Calu3 (cell line): ENCODE measurements at regions of chr14 and their contacts with region 1.

Region 1: GRCh38 chr14:76962303-76962660 is 66.2 kb downstream of the IRF2BPL start:
- DNase-seq: no peak
- H3K4me3 Mint-ChIP-seq: peak overlapping the region; percentile 75
- H3K27ac Mint-ChIP-seq: peak overlapping the region; percentile 99
- H3K4me1 Mint-ChIP-seq: peaks cover 59% of the 10 kb centered on the region
- H3K27me3 Mint-ChIP-seq: no peaks in the 10 kb centered on the region
- CTCF ChIP-seq: no peak

Region 2: GRCh38 chr14:76595266-76595665 is 367.0 kb before region 1 on chr14:
- CTCF ChIA-PET with region 1: no interaction called
- intact Hi-C with region 1: no loop called
- DNase-seq: no peak
- H3K4me3 Mint-ChIP-seq: no peak overlapping the region
- H3K27ac Mint-ChIP-seq: no peak overlapping the region
- H3K4me1 Mint-ChIP-seq: no peaks in the 10 kb centered on the region
- H3K27me3 Mint-ChIP-seq: peaks cover 75% of the 10 kb centered on the region
- CTCF ChIP-seq: no peak

Region 3: GRCh38 chr14:76918751-76919543 is 43.3 kb before region 1 on chr14:
- CTCF ChIA-PET with region 1: interaction called, 17 read pairs
- intact Hi-C with region 1: loop called (anchors 5 kb)
- DNase-seq: peak; percentile 92
- H3K4me3 Mint-ChIP-seq: peak overlapping the region; percentile 55
- H3K27ac Mint-ChIP-seq: peak overlapping the region; percentile 84
- H3K4me1 Mint-ChIP-seq: peaks cover 63% of the 10 kb centered on the region
- H3K27me3 Mint-ChIP-seq: no peaks in the 10 kb centered on the region
- CTCF ChIP-seq: no peak

Region 4: GRCh38 chr14:76997256-76997970 is 35.1 kb after region 1 on chr14:
- CTCF ChIA-PET with region 1: no interaction called
- intact Hi-C with region 1: no loop called
- DNase-seq: no peak
- H3K4me3 Mint-ChIP-seq: no peak overlapping the region
- H3K27ac Mint-ChIP-seq: no peak overlapping the region
- H3K4me1 Mint-ChIP-seq: peaks cover 9% of the 10 kb centered on the region
- H3K27me3 Mint-ChIP-seq: no peaks in the 10 kb centered on the region
- CTCF ChIP-seq: no peak